WTC11 (cell line): ENCODE measurements at regions of chr5 and their contacts with region 1.

Region 1: GRCh38 chr5:81851481-81852178 is 100.7 kb upstream of the SSBP2 start:
- DNase-seq: peak; percentile 96
- ATAC-seq: peak; percentile 85
- H3K4me3 Mint-ChIP-seq: peak overlapping the region; percentile 77
- H3K27ac Mint-ChIP-seq: peak overlapping the region; percentile 100
- H3K4me1 Mint-ChIP-seq: peaks cover 79% of the 10 kb centered on the region
- H3K27me3 Mint-ChIP-seq: no peaks in the 10 kb centered on the region
- CTCF ChIP-seq: no peak

Region 2: DNA sequence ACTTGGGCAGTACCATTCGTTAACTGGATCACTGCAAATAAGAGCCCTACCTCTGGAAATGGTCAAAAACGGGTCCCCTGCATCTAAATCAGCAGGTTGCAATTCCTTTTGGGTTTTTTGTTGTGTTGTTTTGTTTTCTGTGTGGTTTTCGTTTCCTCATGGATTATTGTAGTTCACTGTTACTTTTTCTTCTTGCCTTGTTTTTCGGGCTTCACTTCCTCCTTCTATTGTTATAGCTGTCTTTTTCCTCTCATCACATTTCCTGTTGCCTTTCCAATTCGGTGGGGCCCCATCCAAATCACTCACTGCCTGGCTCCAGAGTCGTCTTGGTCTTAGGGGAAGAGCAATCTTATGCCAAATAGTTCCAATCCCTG is 92.0 kb before region 1 on chr5:
- CTCF ChIA-PET with region 1: interaction called, 104 read pairs
- POLR2A ChIA-PET with region 1: interaction called, 12 read pairs
- DNase-seq: no peak
- ATAC-seq: no peak
- H3K4me3 Mint-ChIP-seq: no peak overlapping the region
- H3K27ac Mint-ChIP-seq: peak overlapping the region; percentile 10; the same call in 1 of the 2 replicates
- H3K4me1 Mint-ChIP-seq: peaks cover 51% of the 10 kb centered on the region
- H3K27me3 Mint-ChIP-seq: no peaks in the 10 kb centered on the region
- CTCF ChIP-seq: no peak

Region 3: DNA sequence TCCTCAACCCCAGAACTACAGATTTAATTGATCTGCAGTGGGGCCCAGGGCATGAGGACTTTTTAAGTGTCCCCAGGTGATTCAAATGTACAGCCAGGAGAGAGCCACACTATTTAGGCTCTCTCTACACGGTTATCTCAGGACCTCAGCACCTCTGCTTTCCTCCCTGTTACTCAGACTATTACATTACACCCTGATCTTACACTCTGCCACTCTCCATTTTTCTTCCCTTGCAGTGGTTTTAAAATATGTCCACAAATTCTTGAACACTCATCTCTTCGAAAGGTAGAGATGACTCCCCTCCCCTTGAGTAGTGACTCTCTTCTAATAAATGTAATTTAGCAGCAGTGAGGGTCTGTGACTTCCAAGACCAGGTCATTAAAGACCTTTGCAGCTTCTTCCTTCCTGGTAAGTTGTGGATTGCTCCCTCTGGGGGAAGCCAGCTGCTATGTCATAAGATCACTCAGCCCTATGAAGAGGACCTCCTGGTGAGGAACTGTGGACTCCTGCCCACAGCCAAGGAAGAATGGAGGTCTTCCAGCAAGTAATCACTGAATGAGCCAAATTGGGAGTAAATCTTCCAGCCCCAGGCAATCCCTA is 13.2 kb before region 1 on chr5:
- CTCF ChIA-PET with region 1: interaction called, 32 read pairs
- POLR2A ChIA-PET with region 1: interaction called, 5 read pairs
- DNase-seq: no peak
- ATAC-seq: peak; percentile 90
- H3K4me3 Mint-ChIP-seq: no peak overlapping the region
- H3K27ac Mint-ChIP-seq: no peak overlapping the region
- H3K4me1 Mint-ChIP-seq: peaks cover 17% of the 10 kb centered on the region
- H3K27me3 Mint-ChIP-seq: no peaks in the 10 kb centered on the region
- CTCF ChIP-seq: peak; percentile 28; the same call in 1 of the 2 replicates

Region 4: GRCh38 chr5:82031220-82032119 is 179.8 kb after region 1 on chr5:
- CTCF ChIA-PET with region 1: no interaction called
- POLR2A ChIA-PET with region 1: no interaction called
- DNase-seq: peak; percentile 48
- ATAC-seq: peak; percentile 89
- H3K4me3 Mint-ChIP-seq: no peak overlapping the region
- H3K27ac Mint-ChIP-seq: peak overlapping the region; percentile 82
- H3K4me1 Mint-ChIP-seq: peaks cover 14% of the 10 kb centered on the region
- H3K27me3 Mint-ChIP-seq: no peaks in the 10 kb centered on the region
- CTCF ChIP-seq: no peak